Activated naive CD4-positive, alpha-beta T cell treated with anti-CD3 and anti-CD28 coated beads for 36 hours (primary cell): ENCODE measurements at regions of chr19 and their contacts with region 1.

Region 1: GRCh38 chr19:17075035-17075863 is at the starts of genes HAUS8 and MYO9B:
- DNase-seq: peak; percentile 100
- H3K4me3 Mint-ChIP-seq: peak within 1 kb of the TSS; percentile 100
- H3K27ac Mint-ChIP-seq: peak within 1 kb of the TSS; percentile 98
- H3K4me1 Mint-ChIP-seq: peaks cover 55% of the 10 kb centered on the region
- H3K27me3 Mint-ChIP-seq: no peaks in the 10 kb centered on the region
- total RNA-seq, gene HAUS8: 47.3 to 48.8 TPM
- total RNA-seq, gene MYO9B: 73.1 to 78.6 TPM

Region 2: GRCh38 chr19:15125232-15126067 is 1949.8 kb before region 1 on chr19:
- CTCF ChIA-PET with region 1: no interaction called
- intact Hi-C with region 1: loop called (anchors 5 kb)
- DNase-seq: peak; percentile 99
- H3K4me3 Mint-ChIP-seq: peak overlapping the region; percentile 88
- H3K27ac Mint-ChIP-seq: peak overlapping the region; percentile 94
- H3K4me1 Mint-ChIP-seq: peaks cover 31% of the 10 kb centered on the region
- H3K27me3 Mint-ChIP-seq: no peaks in the 10 kb centered on the region

Region 3: GRCh38 chr19:16829010-16829821 is 246.0 kb before region 1 on chr19 and contains the start of gene SIN3B:
- CTCF ChIA-PET with region 1: no interaction called
- intact Hi-C with region 1: no loop called
- DNase-seq: peak; percentile 91
- H3K4me3 Mint-ChIP-seq: peak within 1 kb of the TSS; percentile 82
- H3K27ac Mint-ChIP-seq: peak within 1 kb of the TSS; percentile 81
- H3K4me1 Mint-ChIP-seq: peaks cover 34% of the 10 kb centered on the region
- H3K27me3 Mint-ChIP-seq: peaks cover 9% of the 10 kb centered on the region
- total RNA-seq, gene SIN3B: 18.8 to 20.6 TPM

Region 4: DNA sequence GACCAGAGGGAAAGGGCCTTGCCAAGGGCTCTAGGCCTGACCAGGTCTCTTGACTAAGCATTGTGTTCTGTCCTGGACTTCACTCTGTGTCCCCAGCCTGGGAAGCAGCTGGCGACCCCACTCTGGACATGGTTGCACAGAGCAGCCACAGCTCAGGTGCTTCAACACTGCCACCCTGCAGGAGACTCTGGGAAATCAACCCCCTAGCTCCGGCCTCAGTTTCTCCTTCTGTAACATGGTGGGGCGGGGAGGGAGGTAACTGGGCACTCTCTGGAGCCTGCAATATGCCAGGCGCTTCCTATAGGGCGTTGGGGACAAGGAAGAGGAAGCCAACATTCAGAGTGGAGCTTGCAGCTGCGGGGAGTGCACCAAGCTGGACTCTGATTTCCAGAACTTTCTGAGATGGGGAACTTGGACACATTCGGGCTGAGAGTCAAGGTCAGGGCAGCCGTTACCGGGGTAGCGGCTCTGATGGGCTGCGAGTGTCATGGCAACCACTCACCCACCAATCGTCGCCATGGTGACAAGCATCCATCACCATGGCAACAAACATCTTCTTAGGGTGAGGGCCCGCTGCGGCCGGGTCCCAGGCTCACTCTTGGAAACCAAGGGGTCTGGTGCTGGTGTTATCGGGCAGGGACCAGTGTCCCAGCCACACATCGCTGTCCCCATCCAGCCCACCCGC is 173.6 kb before region 1 on chr19:
- CTCF ChIA-PET with region 1: no interaction called
- intact Hi-C with region 1: no loop called
- DNase-seq: no peak
- H3K4me3 Mint-ChIP-seq: no peak overlapping the region
- H3K27ac Mint-ChIP-seq: no peak overlapping the region
- H3K4me1 Mint-ChIP-seq: peaks cover 13% of the 10 kb centered on the region
- H3K27me3 Mint-ChIP-seq: peaks cover 5% of the 10 kb centered on the region

Region 5: GRCh38 chr19:17125715-17126677 is 50.7 kb after region 1 on chr19:
- CTCF ChIA-PET with region 1: interaction called, 5 read pairs
- intact Hi-C with region 1: loop called (anchors 1 kb)
- DNase-seq: peak; percentile 79
- H3K4me3 Mint-ChIP-seq: peak overlapping the region; percentile 72
- H3K27ac Mint-ChIP-seq: peak overlapping the region; percentile 95
- H3K4me1 Mint-ChIP-seq: peaks cover 38% of the 10 kb centered on the region
- H3K27me3 Mint-ChIP-seq: no peaks in the 10 kb centered on the region

Region 6: DNA sequence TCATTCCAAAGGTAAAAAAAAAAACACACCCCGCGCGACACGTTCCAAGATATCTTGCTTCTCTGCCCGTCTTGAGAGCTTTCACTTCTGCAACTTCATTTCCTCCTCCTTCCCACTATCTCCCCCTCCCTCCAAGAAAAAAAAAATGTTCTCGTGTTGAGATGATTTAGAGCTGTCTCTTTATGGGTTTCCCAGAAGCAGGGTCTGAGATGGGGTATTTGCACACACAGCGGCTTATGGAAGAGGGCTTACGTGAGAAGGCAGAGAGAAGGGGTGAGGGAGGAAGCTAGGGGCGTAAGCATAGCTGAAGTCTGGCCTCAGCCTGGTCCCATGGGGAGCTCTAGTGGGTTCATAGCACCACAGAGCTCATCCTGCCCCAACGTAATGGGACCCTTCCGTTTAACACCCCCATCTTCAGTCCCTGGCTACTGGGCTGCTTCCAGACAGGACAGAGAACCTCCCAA is 108.6 kb after region 1 on chr19:
- CTCF ChIA-PET with region 1: interaction called, 3 read pairs
- intact Hi-C with region 1: loop called (anchors 1 kb)
- DNase-seq: peak; percentile 38
- H3K4me3 Mint-ChIP-seq: peak overlapping the region; percentile 66
- H3K27ac Mint-ChIP-seq: peak overlapping the region; percentile 84
- H3K4me1 Mint-ChIP-seq: peaks cover 19% of the 10 kb centered on the region
- H3K27me3 Mint-ChIP-seq: no peaks in the 10 kb centered on the region

Region 7: DNA sequence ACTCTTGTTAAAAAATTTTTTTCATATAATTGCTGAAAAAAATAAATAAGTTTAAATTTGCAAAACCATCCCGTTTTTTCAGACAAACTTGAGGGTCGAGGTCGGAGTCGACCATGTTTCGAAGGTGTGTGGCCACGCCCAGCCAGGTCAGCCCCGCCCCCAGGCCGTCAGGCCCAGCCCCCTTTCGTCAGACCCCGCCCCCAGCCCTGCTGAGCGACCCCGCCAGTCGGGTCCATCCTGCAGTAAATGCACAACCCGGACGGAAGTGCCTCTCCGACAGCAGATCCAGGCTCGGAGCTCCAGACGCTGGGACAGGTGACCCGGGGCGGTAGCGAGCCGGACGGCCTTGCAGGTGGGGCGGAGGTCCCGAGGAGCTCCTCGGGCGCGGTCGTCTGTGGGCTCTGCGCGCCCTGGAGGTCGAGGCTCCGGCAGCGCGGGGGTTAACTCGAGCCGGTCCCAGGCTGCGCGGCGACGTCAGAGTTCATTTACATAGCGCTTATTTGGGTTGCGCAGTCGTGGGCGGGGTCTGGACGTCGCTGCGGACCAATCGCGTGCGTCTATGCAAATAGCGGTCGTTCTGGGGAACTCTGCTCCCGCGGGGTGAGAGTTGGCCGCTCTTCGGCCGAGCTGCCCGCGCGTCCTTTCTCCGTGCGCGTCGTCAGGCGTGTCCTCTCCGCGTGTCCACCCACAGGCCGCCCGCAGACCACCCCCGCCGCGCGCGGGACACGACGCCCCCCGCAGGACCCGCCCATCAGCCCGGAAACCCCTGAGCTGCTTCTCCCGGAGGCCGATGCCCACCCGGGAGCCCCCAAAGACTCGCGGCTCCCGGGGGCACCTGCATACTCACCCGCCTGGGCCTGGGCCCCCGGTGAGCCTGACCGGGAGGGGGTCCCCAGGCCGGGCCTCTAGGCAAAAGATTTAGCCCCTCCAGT is 151.0 kb after region 1 on chr19 and contains the start of gene OCEL1:
- CTCF ChIA-PET with region 1: no interaction called
- intact Hi-C with region 1: loop called (anchors 1 kb)
- DNase-seq: peak; percentile 98
- H3K4me3 Mint-ChIP-seq: peak within 1 kb of the TSS; percentile 83
- H3K27ac Mint-ChIP-seq: peak within 1 kb of the TSS; percentile 90
- H3K4me1 Mint-ChIP-seq: peaks cover 5% of the 10 kb centered on the region
- H3K27me3 Mint-ChIP-seq: no peaks in the 10 kb centered on the region
- total RNA-seq, gene OCEL1: 8.7 to 9.3 TPM

Region 8: GRCh38 chr19:17266975-17267788 is 191.9 kb after region 1 on chr19 and contains the start of gene BABAM1:
- CTCF ChIA-PET with region 1: interaction called, 4 read pairs
- intact Hi-C with region 1: loop called (anchors 2 kb)
- DNase-seq: peak; percentile 99
- H3K4me3 Mint-ChIP-seq: peak within 1 kb of the TSS; percentile 87
- H3K27ac Mint-ChIP-seq: peak within 1 kb of the TSS; percentile 85
- H3K4me1 Mint-ChIP-seq: peaks cover 20% of the 10 kb centered on the region
- H3K27me3 Mint-ChIP-seq: no peaks in the 10 kb centered on the region
- total RNA-seq, gene BABAM1: 108 to 109 TPM

Region 9: DNA sequence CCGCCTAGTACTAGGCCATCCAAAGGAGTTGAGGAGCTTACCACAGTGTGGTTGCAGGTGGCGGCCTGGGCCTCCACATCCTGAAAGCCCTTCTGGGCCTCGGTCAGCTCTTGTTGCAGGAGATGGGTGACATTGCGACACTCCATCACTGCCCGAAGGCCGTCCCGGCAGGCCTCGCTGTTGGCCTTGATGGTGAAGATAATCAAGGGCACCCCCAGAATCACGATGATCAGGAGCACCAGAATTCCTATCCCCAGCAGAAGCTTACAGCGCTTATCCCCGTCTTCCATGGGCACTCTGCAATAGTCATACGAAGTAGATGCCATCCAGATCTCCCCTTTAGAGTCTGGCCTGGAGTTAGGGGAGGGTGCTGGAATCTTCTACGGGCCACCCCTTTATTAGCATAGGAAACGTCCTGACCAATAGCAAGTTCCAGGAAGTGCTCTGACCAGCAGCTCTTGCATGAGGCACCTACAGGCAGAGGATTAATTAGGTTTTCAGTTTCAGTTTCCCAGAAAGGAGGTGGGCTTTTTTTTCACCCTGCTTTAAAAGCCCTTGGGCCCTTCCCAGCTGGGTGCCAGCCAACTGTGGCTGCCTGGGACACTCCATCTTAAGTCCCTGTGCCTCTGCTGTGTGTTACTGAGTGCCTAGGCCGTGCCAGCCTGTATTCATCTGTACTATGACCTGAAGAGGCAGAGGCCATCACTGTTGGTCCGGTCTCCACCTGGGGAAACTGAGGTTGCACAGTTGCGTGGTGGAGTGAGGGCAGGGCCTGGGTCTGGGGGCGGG is 330.2 kb after region 1 on chr19 and contains the start of gene BST2:
- CTCF ChIA-PET with region 1: no interaction called
- intact Hi-C with region 1: loop called (anchors 10 kb)
- DNase-seq: peak; percentile 69
- H3K4me3 Mint-ChIP-seq: peak within 1 kb of the TSS; percentile 80
- H3K27ac Mint-ChIP-seq: peak within 1 kb of the TSS; percentile 94
- H3K4me1 Mint-ChIP-seq: peaks cover 33% of the 10 kb centered on the region
- H3K27me3 Mint-ChIP-seq: no peaks in the 10 kb centered on the region
- total RNA-seq, gene BST2: 117 to 121 TPM